Activated CD4-positive, alpha-beta T cell treated with anti-CD3 and anti-CD28 coated beads, Interleukin-2, amount 10 ng/mL, durations not matched to agents 24 days and 14 days (primary cell): ENCODE measurements at regions of chr20 and their contacts with region 1.

Region 1: DNA sequence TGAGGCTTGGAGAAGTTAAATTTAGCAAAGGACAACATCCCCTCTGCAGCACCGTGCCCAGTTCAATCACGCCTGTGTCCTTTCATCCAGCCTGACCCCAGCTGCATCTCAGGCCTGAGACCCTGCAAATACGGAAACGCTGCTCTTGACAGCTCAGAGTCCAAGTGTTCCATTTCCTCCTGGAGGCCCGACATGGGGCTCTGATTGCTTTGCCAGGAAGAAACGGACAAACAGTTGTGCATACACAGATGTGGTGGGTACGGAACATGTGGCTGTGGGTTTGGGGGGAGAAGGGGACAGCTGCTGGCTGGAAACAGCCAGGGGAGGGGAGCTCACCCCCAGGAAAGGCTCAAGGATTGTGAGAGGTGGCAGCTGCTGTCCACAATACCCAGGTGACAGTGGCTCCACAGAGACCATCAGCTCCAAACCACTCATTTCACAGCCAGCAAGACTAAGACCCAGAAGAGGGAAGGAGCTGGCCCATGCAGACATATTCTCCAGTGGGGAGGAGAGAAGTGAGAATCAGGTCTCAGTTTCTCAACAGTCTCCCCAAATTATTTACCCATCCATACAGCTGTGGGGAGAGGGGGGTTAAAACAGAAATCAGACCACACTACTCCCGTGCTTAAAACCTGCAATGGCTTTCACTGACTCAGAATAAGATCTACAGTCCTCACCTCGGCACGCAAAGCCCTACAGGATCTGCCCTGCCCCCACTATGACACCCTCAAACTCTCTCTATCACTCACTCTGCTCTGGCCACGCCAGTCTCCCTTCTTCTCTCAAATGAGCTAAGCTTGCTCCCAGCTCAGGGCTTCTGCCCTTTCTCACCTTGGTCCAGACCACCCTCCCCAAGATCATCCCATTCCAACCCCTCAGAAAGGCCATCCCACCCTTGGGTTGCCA is 89.1 kb downstream of the PREX1 start:
- DNase-seq: peak; percentile 89
- H3K4me3 Mint-ChIP-seq: peak overlapping the region; percentile 70
- H3K27ac Mint-ChIP-seq: peak overlapping the region; percentile 91
- H3K4me1 Mint-ChIP-seq: peaks cover 56% of the 10 kb centered on the region
- H3K27me3 Mint-ChIP-seq: no peaks in the 10 kb centered on the region

Region 2: GRCh38 chr20:48538420-48539203 is 200.0 kb before region 1 on chr20:
- intact Hi-C with region 1: no loop called
- DNase-seq: no peak
- H3K4me3 Mint-ChIP-seq: no peak overlapping the region
- H3K27ac Mint-ChIP-seq: peak overlapping the region; percentile 52
- H3K4me1 Mint-ChIP-seq: no peaks in the 10 kb centered on the region
- H3K27me3 Mint-ChIP-seq: peaks cover 8% of the 10 kb centered on the region

Region 3: GRCh38 chr20:48718857-48719578 is 19.6 kb before region 1 on chr20:
- intact Hi-C with region 1: loop called (anchors 2 kb)
- DNase-seq: peak; percentile 80
- H3K4me3 Mint-ChIP-seq: peak overlapping the region; percentile 76
- H3K27ac Mint-ChIP-seq: peak overlapping the region; percentile 81
- H3K4me1 Mint-ChIP-seq: peaks cover 80% of the 10 kb centered on the region
- H3K27me3 Mint-ChIP-seq: no peaks in the 10 kb centered on the region

Region 4: GRCh38 chr20:48750947-48751635 is 12.4 kb after region 1 on chr20:
- intact Hi-C with region 1: loop called (anchors 1 kb)
- DNase-seq: peak; percentile 82
- H3K4me3 Mint-ChIP-seq: peak overlapping the region; percentile 58
- H3K27ac Mint-ChIP-seq: peak overlapping the region; percentile 82
- H3K4me1 Mint-ChIP-seq: peaks cover 55% of the 10 kb centered on the region
- H3K27me3 Mint-ChIP-seq: no peaks in the 10 kb centered on the region

Region 5: DNA sequence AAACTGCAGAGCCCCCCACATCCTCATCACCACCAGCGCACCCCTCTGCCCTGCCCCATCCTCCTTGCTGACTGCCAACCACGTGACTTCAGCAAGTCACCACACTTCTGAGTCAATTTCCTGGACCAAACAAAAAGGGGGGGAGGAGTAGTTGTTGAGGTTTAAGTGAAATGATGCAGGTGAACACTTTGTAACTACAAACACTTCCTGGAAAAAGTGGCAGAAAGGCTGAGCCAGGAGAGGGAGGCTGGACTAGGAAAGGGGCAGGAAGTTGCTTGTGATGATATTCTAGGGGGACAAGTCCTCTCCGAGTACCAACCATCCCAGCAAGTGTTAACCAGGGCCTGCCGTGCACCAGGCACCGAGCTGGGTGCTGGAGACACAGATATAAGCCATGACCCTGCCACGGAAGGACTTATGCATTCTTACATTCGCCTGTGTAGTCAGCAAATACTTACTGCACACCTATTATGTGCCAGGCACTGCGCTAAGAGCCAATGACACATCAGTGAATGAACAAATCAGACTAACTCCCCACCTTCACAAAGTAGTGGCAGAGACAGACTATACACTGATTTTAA is 21.8 kb after region 1 on chr20:
- intact Hi-C with region 1: loop called (anchors 1 kb)
- DNase-seq: peak; percentile 93
- H3K4me3 Mint-ChIP-seq: peak overlapping the region; percentile 75
- H3K27ac Mint-ChIP-seq: peak overlapping the region; percentile 97
- H3K4me1 Mint-ChIP-seq: peaks cover 76% of the 10 kb centered on the region
- H3K27me3 Mint-ChIP-seq: no peaks in the 10 kb centered on the region

Region 6: DNA sequence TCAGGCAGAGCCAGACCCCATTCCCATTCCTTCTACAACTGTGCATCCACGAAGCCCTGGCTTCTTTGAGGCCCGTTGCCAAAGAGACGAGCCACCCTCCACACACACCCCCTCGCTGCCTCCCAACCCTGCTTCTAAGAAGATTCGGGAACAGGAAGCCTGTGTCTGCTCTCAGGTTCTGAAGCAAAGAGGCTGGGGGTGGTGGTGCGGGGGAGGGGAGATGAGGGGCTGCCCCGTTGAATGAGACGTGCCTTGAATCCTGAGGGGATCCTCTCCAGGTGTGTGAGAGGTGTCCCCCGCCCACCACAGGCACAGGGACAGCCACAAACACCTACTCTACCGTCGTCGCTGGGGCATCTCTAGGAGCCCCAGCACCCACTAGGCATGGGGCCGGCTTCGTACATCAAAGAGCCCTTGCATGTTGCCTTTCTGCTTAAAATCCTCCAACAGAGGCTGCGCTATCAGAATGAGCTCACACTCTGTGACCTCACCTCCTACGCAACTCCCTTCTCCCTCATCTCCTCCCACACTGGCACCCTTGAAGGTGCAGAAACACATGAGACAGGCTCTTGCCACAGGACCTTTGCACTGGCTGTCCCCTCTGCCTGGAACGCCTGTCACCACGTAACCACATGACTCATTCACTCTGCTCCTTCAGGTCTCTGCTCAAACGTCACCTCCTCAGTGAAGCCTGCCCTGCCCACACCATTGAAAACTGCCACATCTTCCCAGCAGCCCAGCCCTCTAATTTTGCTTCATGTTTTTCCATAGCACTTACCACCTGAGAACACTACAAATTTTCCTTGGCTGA is 30.6 kb after region 1 on chr20:
- intact Hi-C with region 1: loop called (anchors 1 kb)
- DNase-seq: peak; percentile 94
- H3K4me3 Mint-ChIP-seq: peak overlapping the region; percentile 64
- H3K27ac Mint-ChIP-seq: peak overlapping the region; percentile 94
- H3K4me1 Mint-ChIP-seq: peaks cover 81% of the 10 kb centered on the region
- H3K27me3 Mint-ChIP-seq: peaks cover 2% of the 10 kb centered on the region

Region 7: GRCh38 chr20:48783533-48784272 is 45.1 kb after region 1 on chr20:
- intact Hi-C with region 1: loop called (anchors 1 kb)
- DNase-seq: peak; percentile 87
- H3K4me3 Mint-ChIP-seq: no peak overlapping the region
- H3K27ac Mint-ChIP-seq: no peak overlapping the region
- H3K4me1 Mint-ChIP-seq: peaks cover 38% of the 10 kb centered on the region
- H3K27me3 Mint-ChIP-seq: no peaks in the 10 kb centered on the region

Region 8: GRCh38 chr20:48846498-48847485 is 108.1 kb after region 1 on chr20:
- intact Hi-C with region 1: loop called (anchors 1 kb)
- DNase-seq: peak; percentile 67
- H3K4me3 Mint-ChIP-seq: peak overlapping the region; percentile 23
- H3K27ac Mint-ChIP-seq: peak overlapping the region; percentile 89
- H3K4me1 Mint-ChIP-seq: peaks cover 21% of the 10 kb centered on the region
- H3K27me3 Mint-ChIP-seq: peaks cover 17% of the 10 kb centered on the region